ENCODE measurements at regions of chr2 and their contacts with region 1.

Region 1: GRCh38 chr2:241482176-241482955 is 26.0 kb downstream of the STK25 start:
- DNase-seq: no peak
- H3K4me3 ChIP-seq: no peak overlapping the region
- H3K27ac ChIP-seq: no peak overlapping the region
- H3K4me1 ChIP-seq: no peaks in the 10 kb centered on the region
- H3K27me3 ChIP-seq: no peaks in the 10 kb centered on the region
- CTCF ChIP-seq: no peak
- POLR2A ChIP-seq: no peak

Region 2: GRCh38 chr2:240377366-240377765 is 1105.0 kb before region 1 on chr2:
- intact Hi-C with region 1: loop called (anchors 5 kb)
- DNase-seq: no peak
- H3K4me3 ChIP-seq: no peak overlapping the region
- H3K27ac ChIP-seq: no peak overlapping the region
- H3K4me1 ChIP-seq: peaks cover 17% of the 10 kb centered on the region
- H3K27me3 ChIP-seq: no peaks in the 10 kb centered on the region
- CTCF ChIP-seq: no peak
- POLR2A ChIP-seq: no peak

Region 3: GRCh38 chr2:241519669-241520068 is 37.3 kb after region 1 on chr2:
- intact Hi-C with region 1: no loop called
- DNase-seq: no peak
- H3K4me3 ChIP-seq: no peak overlapping the region
- H3K27ac ChIP-seq: no peak overlapping the region
- H3K4me1 ChIP-seq: no peaks in the 10 kb centered on the region
- H3K27me3 ChIP-seq: no peaks in the 10 kb centered on the region
- CTCF ChIP-seq: no peak
- POLR2A ChIP-seq: no peak

Measured in vagina (tissue), 2 donors.